CD8-positive, alpha-beta T cell (primary cell): ENCODE measurements at regions of chr20 and their contacts with region 1.

Region 1: GRCh38 chr20:62080249-62081025 is 14.8 kb upstream of the TAF4 start:
- DNase-seq: no peak
- ATAC-seq: no peak
- H3K4me3 ChIP-seq: no peak overlapping the region
- H3K4me3 Mint-ChIP-seq: no peak overlapping the region
- H3K27ac ChIP-seq: no peak overlapping the region
- H3K27ac Mint-ChIP-seq: no peak overlapping the region
- H3K4me1 ChIP-seq: no peaks in the 10 kb centered on the region
- H3K4me1 Mint-ChIP-seq: no peaks in the 10 kb centered on the region
- H3K27me3 ChIP-seq: no peaks in the 10 kb centered on the region
- H3K27me3 Mint-ChIP-seq: peaks cover 5% of the 10 kb centered on the region
- CTCF ChIP-seq: no peak

Region 2: GRCh38 chr20:61896058-61896961 is 184.1 kb before region 1 on chr20:
- CTCF ChIA-PET with region 1: no interaction called
- POLR2A ChIA-PET with region 1: no interaction called
- intact Hi-C with region 1: no loop called
- DNase-seq: peak in 4 of 9 experiments; percentile 14 to 52 (median 39)
- ATAC-seq: no peak
- H3K4me3 ChIP-seq: no peak overlapping the region
- H3K4me3 Mint-ChIP-seq: no peak overlapping the region
- H3K27ac ChIP-seq: no peak overlapping the region
- H3K27ac Mint-ChIP-seq: no peak overlapping the region
- H3K4me1 ChIP-seq: no peaks in the 10 kb centered on the region
- H3K4me1 Mint-ChIP-seq: no peaks in the 10 kb centered on the region
- H3K27me3 ChIP-seq: no peaks in the 10 kb centered on the region
- H3K27me3 Mint-ChIP-seq: peaks cover 6% of the 10 kb centered on the region
- CTCF ChIP-seq: peak; percentile 43

Region 3: DNA sequence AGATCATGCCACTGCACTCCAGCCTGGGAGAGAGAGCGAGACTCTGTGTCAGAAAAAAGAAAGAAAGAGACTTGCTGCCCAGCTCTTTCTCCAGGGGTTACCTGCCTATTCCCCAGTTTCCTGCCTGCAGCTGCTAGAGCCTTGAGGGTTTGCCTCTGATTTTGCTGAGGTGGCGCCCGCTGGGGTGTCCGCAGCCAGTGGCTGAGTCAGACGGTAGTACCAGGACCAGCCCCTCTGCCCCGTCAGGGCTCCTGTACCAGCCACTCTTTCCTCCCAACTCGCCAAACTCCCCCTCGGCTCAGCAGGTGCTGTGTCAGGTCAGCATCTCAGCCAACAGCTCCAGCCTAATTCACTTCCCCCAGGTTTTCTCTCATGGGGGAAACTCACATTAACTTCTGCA is 34.5 kb after region 1 on chr20:
- CTCF ChIA-PET with region 1: no interaction called
- POLR2A ChIA-PET with region 1: no interaction called
- intact Hi-C with region 1: loop called in 1 of 2 experiments (anchors 1 kb)
- DNase-seq: no peak
- ATAC-seq: no peak
- H3K4me3 ChIP-seq: no peak overlapping the region
- H3K4me3 Mint-ChIP-seq: no peak overlapping the region
- H3K27ac ChIP-seq: no peak overlapping the region
- H3K27ac Mint-ChIP-seq: no peak overlapping the region
- H3K4me1 ChIP-seq: peaks cover 38% of the 10 kb centered on the region
- H3K4me1 Mint-ChIP-seq: peaks cover 30% of the 10 kb centered on the region
- H3K27me3 ChIP-seq: no peaks in the 10 kb centered on the region
- H3K27me3 Mint-ChIP-seq: no peaks in the 10 kb centered on the region
- CTCF ChIP-seq: no peak